Transverse colon (tissue), 4 donors: ENCODE measurements at regions of chr19 and their contacts with region 1.

Region 1: GRCh38 chr19:30406220-30407067 is 34.3 kb downstream of the ZNF536 start:
- DNase-seq: peak; percentile 16
- H3K4me3 ChIP-seq: no peak overlapping the region
- H3K27ac ChIP-seq: no peak overlapping the region
- H3K4me1 ChIP-seq: no peaks in the 10 kb centered on the region
- H3K27me3 ChIP-seq: no peaks in the 10 kb centered on the region
- CTCF ChIP-seq: peak in 2 of 5 experiments; percentile 13 to 23
- EP300 ChIP-seq: no peak
- POLR2A ChIP-seq: no peak

Region 2: DNA sequence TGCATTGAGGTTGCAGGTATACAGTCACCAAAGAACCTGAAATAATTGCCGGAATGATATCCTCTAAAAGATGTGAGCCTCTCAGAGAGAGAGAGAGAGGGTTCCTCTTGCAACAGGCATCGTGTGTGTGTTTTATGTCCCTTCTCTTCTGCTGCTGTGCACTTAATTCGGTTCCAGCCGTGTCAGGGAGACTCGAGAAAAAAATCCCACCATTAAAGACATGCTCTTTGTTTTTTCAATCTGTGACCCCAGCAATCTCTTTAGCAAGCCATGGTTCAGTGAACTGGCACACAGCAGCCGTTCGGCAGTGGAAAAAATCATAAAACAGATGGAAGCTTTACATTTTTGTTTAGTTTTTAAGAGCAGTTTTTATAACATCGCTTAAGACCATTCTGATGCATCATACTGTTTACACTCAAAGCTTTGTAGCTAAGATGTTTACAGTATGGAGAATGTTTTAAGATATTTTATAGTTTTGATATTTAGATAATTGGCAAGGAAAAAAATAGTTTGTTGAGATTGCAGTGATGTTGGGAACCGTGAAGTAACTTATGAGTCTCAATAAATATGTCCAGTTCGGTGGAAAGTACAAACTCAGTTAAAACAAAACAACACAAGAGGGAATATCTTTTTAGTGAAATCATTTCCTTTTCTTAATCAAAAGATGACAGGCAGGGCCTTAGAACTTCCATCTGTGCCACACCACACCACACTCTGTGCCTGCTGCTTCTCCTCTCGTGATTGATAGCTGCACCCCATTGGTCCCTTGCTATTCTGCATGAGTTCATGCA is 65.5 kb before region 1 on chr19:
- in situ Hi-C with region 1: no loop called
- intact Hi-C with region 1: no loop called
- DNase-seq: no peak
- H3K4me3 ChIP-seq: no peak overlapping the region
- H3K27ac ChIP-seq: peak overlapping the region in 1 of 4 donors; percentile 18
- H3K4me1 ChIP-seq: peaks cover 0 to 8% (median 0%) of the 10 kb centered on the region in 4 donors
- H3K27me3 ChIP-seq: no peaks in the 10 kb centered on the region
- CTCF ChIP-seq: no peak
- EP300 ChIP-seq: no peak
- POLR2A ChIP-seq: no peak

Region 3: GRCh38 chr19:30480097-30480496 is 73.7 kb after region 1 on chr19:
- in situ Hi-C with region 1: no loop called
- intact Hi-C with region 1: loop called (anchors 2 kb)
- DNase-seq: no peak
- H3K4me3 ChIP-seq: no peak overlapping the region
- H3K27ac ChIP-seq: peak overlapping the region in 1 of 4 donors; percentile 7
- H3K4me1 ChIP-seq: peaks cover 0 to 2% (median 0%) of the 10 kb centered on the region in 4 donors
- H3K27me3 ChIP-seq: no peaks in the 10 kb centered on the region
- CTCF ChIP-seq: no peak
- EP300 ChIP-seq: no peak
- POLR2A ChIP-seq: no peak